ENCODE measurements at regions of chr12 and their contacts with region 1.

Region 1: GRCh38 chr12:65306366-65307168 is 28.1 kb downstream of the MSRB3 start:
- DNase-seq: no peak
- ATAC-seq: no peak
- H3K4me3 Mint-ChIP-seq: no peak overlapping the region
- H3K27ac Mint-ChIP-seq: no peak overlapping the region
- H3K4me1 Mint-ChIP-seq: peaks cover 24% of the 10 kb centered on the region
- H3K27me3 Mint-ChIP-seq: peaks cover 17% of the 10 kb centered on the region
- CTCF ChIP-seq: no peak

Region 2: GRCh38 chr12:65986047-65986446 is 679.5 kb after region 1 on chr12:
- CTCF ChIA-PET with region 1: no interaction called
- POLR2A ChIA-PET with region 1: no interaction called
- intact Hi-C with region 1: loop called (anchors 1 kb)
- DNase-seq: no peak
- ATAC-seq: no peak
- H3K4me3 Mint-ChIP-seq: no peak overlapping the region
- H3K27ac Mint-ChIP-seq: no peak overlapping the region
- H3K4me1 Mint-ChIP-seq: no peaks in the 10 kb centered on the region
- H3K27me3 Mint-ChIP-seq: no peaks in the 10 kb centered on the region
- CTCF ChIP-seq: no peak

Region 3: GRCh38 chr12:66087365-66087943 is 780.9 kb after region 1 on chr12:
- CTCF ChIA-PET with region 1: no interaction called
- POLR2A ChIA-PET with region 1: no interaction called
- intact Hi-C with region 1: loop called (anchors 5 kb)
- DNase-seq: no peak
- ATAC-seq: peak; percentile 49
- H3K4me3 Mint-ChIP-seq: no peak overlapping the region
- H3K27ac Mint-ChIP-seq: no peak overlapping the region
- H3K4me1 Mint-ChIP-seq: peaks cover under 1% of the 10 kb centered on the region
- H3K27me3 Mint-ChIP-seq: peaks cover 15% of the 10 kb centered on the region
- CTCF ChIP-seq: no peak

Region 4: GRCh38 chr12:66107451-66107915 is 800.9 kb after region 1 on chr12:
- CTCF ChIA-PET with region 1: no interaction called
- POLR2A ChIA-PET with region 1: no interaction called
- intact Hi-C with region 1: loop called (anchors 1 kb)
- DNase-seq: no peak
- ATAC-seq: peak; percentile 85
- H3K4me3 Mint-ChIP-seq: no peak overlapping the region
- H3K27ac Mint-ChIP-seq: no peak overlapping the region
- H3K4me1 Mint-ChIP-seq: peaks cover 3% of the 10 kb centered on the region
- H3K27me3 Mint-ChIP-seq: peaks cover 12% of the 10 kb centered on the region
- CTCF ChIP-seq: peak; percentile 71

Region 5: GRCh38 chr12:66409195-66409871 is 1102.8 kb after region 1 on chr12:
- CTCF ChIA-PET with region 1: no interaction called
- POLR2A ChIA-PET with region 1: no interaction called
- intact Hi-C with region 1: loop called (anchors 5 kb)
- DNase-seq: no peak
- ATAC-seq: no peak
- H3K4me3 Mint-ChIP-seq: no peak overlapping the region
- H3K27ac Mint-ChIP-seq: no peak overlapping the region
- H3K4me1 Mint-ChIP-seq: no peaks in the 10 kb centered on the region
- H3K27me3 Mint-ChIP-seq: no peaks in the 10 kb centered on the region
- CTCF ChIP-seq: no peak